ENCODE measurements at regions of chr1 and their contacts with region 1.

Region 1: DNA sequence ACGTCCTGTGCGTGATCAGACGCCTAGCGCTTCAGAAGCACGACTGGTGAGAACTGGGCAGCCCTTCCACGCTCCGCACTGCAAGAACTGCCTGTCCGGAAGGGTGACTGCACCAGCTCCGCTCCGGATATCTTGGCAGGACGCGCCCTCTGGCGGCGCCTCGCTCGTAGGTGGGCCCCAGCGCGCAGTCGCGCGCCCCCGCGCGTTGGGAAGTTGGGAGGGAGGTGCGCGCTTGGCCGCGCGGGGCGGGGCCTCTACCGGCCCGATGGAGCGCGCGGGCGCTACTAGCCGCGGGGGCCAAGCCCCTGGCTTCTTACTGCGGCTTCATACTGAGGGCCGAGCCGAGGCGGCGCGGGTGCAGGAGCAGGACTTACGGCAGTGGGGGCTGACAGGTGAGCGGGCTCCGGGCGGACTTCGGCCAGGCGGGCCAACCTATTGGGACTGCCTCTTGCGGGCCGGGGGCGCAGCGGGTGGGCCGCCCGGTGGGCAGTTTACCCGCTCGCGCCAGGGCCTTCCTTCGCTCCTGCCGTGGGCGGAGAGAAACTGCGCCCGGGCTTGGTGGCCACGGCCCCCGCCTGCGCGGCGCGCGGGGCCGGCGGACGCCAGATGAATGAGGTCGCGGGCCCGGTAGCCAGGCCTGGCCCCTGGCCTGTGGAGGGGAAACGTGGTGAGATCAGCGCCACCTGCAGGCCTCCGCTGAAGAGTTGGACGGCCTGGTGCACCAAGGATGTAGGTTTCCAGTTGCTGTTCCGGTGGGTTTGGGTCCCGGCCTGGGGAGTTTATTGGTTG is at the start of gene CHD1L:
- DNase-seq: peak; percentile 91 to 93 (median 92)
- H3K4me3 ChIP-seq: peak within 1 kb of the TSS; percentile 21 to 84
- H3K4me3 Mint-ChIP-seq: peak within 1 kb of the TSS; percentile 92 to 97 (median 96)
- H3K27ac ChIP-seq: peak within 1 kb of the TSS; percentile 70
- H3K27ac Mint-ChIP-seq: peak within 1 kb of the TSS; percentile 60 to 93 (median 79)
- H3K4me1 ChIP-seq: peaks cover 37% of the 10 kb centered on the region
- H3K4me1 Mint-ChIP-seq: peaks cover 29 to 49% (median 31%) of the 10 kb centered on the region in 4 donors
- H3K27me3 ChIP-seq: no peaks in the 10 kb centered on the region
- H3K27me3 Mint-ChIP-seq: peaks cover 0 to 1% of the 10 kb centered on the region in 2 donors
- total RNA-seq, gene CHD1L: 29.5 to 31.6 TPM

Region 2: GRCh38 chr1:147167361-147167760 is 75.3 kb before region 1 on chr1:
- CTCF ChIA-PET with region 1: interaction called, 57 read pairs
- POLR2A ChIA-PET with region 1: interaction called, 54 read pairs
- intact Hi-C with region 1: loop called (anchors 1 kb)
- DNase-seq: no peak
- H3K4me3 ChIP-seq: no peak overlapping the region
- H3K4me3 Mint-ChIP-seq: no peak overlapping the region
- H3K27ac ChIP-seq: no peak overlapping the region
- H3K27ac Mint-ChIP-seq: no peak overlapping the region
- H3K4me1 ChIP-seq: peaks cover 18% of the 10 kb centered on the region
- H3K4me1 Mint-ChIP-seq: peaks cover 12 to 27% (median 16%) of the 10 kb centered on the region in 4 donors
- H3K27me3 ChIP-seq: no peaks in the 10 kb centered on the region
- H3K27me3 Mint-ChIP-seq: no peaks in the 10 kb centered on the region

Region 3: GRCh38 chr1:147172168-147172992 is 70.3 kb before region 1 on chr1 and contains the start of gene PRKAB2:
- CTCF ChIA-PET with region 1: interaction called, 57 read pairs
- POLR2A ChIA-PET with region 1: interaction called, 54 read pairs
- intact Hi-C with region 1: loop called (anchors 1 kb)
- DNase-seq: peak; percentile 89 to 92 (median 90)
- H3K4me3 ChIP-seq: peak within 1 kb of the TSS; percentile 72 to 84
- H3K4me3 Mint-ChIP-seq: peak within 1 kb of the TSS; percentile 96 to 99 (median 98)
- H3K27ac ChIP-seq: peak within 1 kb of the TSS; percentile 75
- H3K27ac Mint-ChIP-seq: peak within 1 kb of the TSS; percentile 94 to 98 (median 96)
- H3K4me1 ChIP-seq: peaks cover 32% of the 10 kb centered on the region
- H3K4me1 Mint-ChIP-seq: peaks cover 21 to 43% (median 31%) of the 10 kb centered on the region in 4 donors
- H3K27me3 ChIP-seq: no peaks in the 10 kb centered on the region
- H3K27me3 Mint-ChIP-seq: peaks cover 0 to 1% of the 10 kb centered on the region in 2 donors
- total RNA-seq, gene PRKAB2: 19.8 to 24.5 TPM

Region 4: GRCh38 chr1:147225193-147225730 is 17.4 kb before region 1 on chr1 and contains the start of gene FMO5:
- CTCF ChIA-PET with region 1: interaction called, 8 read pairs
- POLR2A ChIA-PET with region 1: interaction called, 17 read pairs
- intact Hi-C with region 1: loop called (anchors 1 kb)
- DNase-seq: peak; percentile 42 to 73 (median 54)
- H3K4me3 ChIP-seq: peak within 1 kb of the TSS; percentile 63 to 96
- H3K4me3 Mint-ChIP-seq: peak within 1 kb of the TSS; percentile 89 to 98 (median 97)
- H3K27ac ChIP-seq: peak within 1 kb of the TSS; percentile 41
- H3K27ac Mint-ChIP-seq: peak within 1 kb of the TSS; percentile 78 to 97 (median 89)
- H3K4me1 ChIP-seq: peaks cover 11% of the 10 kb centered on the region
- H3K4me1 Mint-ChIP-seq: peaks cover 7 to 36% (median 14%) of the 10 kb centered on the region in 4 donors
- H3K27me3 ChIP-seq: no peaks in the 10 kb centered on the region
- H3K27me3 Mint-ChIP-seq: no peaks in the 10 kb centered on the region
- total RNA-seq, gene FMO5: 1.0 to 1.5 TPM

Region 5: DNA sequence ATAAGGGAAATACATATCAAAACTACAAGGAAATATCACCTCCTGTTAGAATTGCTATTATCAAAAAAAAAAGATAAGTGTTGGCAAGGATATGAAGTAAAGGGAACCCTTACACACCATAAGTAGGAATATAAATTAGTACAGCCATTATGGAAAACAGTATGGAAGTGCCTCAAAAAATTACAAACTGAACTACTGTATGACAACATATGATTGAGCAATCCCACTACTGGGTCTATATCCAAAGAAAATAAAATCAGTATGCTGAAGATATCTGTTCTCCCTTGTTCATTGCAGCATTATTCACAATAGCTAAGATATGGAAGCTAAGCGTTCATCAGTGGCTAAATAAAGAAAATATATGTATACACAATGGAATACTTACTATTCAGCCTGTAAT is 59.6 kb after region 1 on chr1:
- CTCF ChIA-PET with region 1: no interaction called
- POLR2A ChIA-PET with region 1: no interaction called
- intact Hi-C with region 1: no loop called
- DNase-seq: no peak
- H3K4me3 ChIP-seq: no peak overlapping the region
- H3K4me3 Mint-ChIP-seq: no peak overlapping the region
- H3K27ac ChIP-seq: no peak overlapping the region
- H3K27ac Mint-ChIP-seq: no peak overlapping the region
- H3K4me1 ChIP-seq: no peaks in the 10 kb centered on the region
- H3K4me1 Mint-ChIP-seq: no peaks in the 10 kb centered on the region
- H3K27me3 ChIP-seq: no peaks in the 10 kb centered on the region
- H3K27me3 Mint-ChIP-seq: no peaks in the 10 kb centered on the region

Measured in CD4-positive, alpha-beta memory T cell (primary cell).